ENCODE measurements at regions of chr11 and their contacts with region 1.

Region 1: GRCh38 chr11:125164422-125165110 is at the start of gene PKNOX2:
- DNase-seq: peak; percentile 85 to 95
- ATAC-seq: peak; percentile 90
- H3K4me3 ChIP-seq: peak within 1 kb of the TSS; percentile 75 to 93
- H3K27ac ChIP-seq: peak within 1 kb of the TSS; percentile 64 to 90
- H3K4me1 ChIP-seq: no peaks in the 10 kb centered on the region
- H3K27me3 ChIP-seq: no peaks in the 10 kb centered on the region
- total RNA-seq, gene PKNOX2: 7.7 to 19.8 TPM

Region 2: DNA sequence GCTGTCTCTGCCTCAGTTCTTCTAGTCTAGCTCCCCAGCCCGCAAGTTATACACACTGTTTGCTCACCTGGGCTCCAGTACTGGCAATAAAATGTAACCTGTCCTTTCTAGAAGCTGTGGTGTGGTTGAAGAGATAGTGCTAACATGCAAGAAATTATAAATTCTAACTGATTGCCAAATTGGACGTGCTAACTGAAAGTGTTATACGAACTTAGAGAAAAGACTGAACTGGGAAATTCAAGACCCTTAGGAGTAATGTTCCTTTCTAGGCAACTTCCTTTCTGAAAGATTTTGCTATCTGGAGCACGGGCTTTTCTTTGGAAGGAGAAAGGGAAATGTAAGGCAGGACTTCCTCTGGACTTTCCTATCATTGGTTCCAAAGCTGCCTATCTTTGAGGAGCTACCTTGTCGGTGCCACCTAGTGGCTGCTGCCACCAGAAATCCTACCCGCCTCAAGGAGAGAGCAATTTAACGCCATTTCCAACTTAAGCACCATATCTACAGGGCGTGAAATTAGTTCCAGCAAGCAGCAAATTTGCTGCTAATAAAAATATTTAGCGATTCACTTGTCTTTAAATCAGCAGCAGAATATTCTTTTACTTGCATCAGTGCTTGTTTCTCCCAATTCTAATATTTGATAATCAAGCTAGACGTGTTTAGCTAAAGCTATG is 40.5 kb before region 1 on chr11:
- intact Hi-C with region 1: loop called in 1 of 2 experiments (anchors 5 kb)
- DNase-seq: peak in 1 of 2 donors; percentile 68
- ATAC-seq: peak; percentile 69
- H3K4me3 ChIP-seq: no peak overlapping the region
- H3K27ac ChIP-seq: no peak overlapping the region
- H3K4me1 ChIP-seq: no peaks in the 10 kb centered on the region
- H3K27me3 ChIP-seq: no peaks in the 10 kb centered on the region

Region 3: GRCh38 chr11:125224391-125225010 is 59.9 kb after region 1 on chr11:
- intact Hi-C with region 1: loop called (anchors 5 kb)
- DNase-seq: peak in 1 of 2 donors; percentile 76
- ATAC-seq: no peak
- H3K4me3 ChIP-seq: no peak overlapping the region
- H3K27ac ChIP-seq: no peak overlapping the region
- H3K4me1 ChIP-seq: no peaks in the 10 kb centered on the region
- H3K27me3 ChIP-seq: no peaks in the 10 kb centered on the region

Region 4: DNA sequence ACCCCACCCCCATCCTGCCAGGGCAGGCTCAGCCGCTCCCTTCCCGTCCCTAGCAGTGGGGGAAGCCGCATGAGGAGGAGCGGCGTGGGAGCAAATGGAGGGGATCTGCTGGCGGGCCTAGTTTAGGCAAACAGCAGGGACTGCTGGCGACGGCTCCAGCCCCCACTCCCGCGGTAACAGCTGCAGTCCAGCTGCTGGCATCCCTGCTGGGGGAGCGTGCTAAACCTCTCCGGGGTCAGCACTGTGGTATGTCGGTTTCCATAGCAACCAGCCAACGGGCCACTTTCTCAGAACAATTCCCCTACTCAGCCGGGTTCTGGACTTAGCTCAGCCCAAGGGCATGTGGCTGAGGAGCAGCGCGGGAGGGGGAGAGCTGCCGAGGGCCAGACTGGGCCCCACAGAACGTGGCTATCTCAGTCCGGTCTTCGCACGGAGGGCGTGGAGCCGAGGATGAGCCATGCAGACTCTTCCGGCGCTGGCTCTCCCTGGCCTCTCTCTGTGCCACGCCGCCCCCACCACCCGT is 98.8 kb after region 1 on chr11:
- intact Hi-C with region 1: loop called in 1 of 2 experiments (anchors 5 kb)
- DNase-seq: peak; percentile 89 to 91
- ATAC-seq: peak; percentile 81
- H3K4me3 ChIP-seq: no peak overlapping the region
- H3K27ac ChIP-seq: no peak overlapping the region
- H3K4me1 ChIP-seq: no peaks in the 10 kb centered on the region
- H3K27me3 ChIP-seq: no peaks in the 10 kb centered on the region

Region 5: DNA sequence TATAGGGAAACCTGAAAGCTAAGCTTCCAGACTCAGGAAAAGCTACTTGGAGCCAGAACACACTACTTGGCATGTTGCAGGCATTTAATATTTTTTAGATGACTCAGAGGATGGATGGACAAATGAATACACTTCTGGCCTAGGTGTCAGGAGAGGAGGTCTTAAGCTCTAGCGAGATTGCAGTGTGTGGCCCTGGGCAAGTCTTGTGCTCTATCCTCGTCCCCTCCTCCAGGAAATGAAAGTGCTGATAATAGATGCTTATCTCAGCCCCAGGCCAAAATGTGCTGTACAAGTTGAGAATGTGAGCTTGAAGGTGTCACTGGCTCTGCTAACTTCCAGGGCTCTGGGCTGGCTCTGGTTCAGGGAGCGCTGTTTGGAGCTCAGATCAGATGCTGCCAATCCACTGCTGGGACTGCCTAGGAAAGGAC is 136.2 kb after region 1 on chr11:
- intact Hi-C with region 1: loop called in 1 of 2 experiments (anchors 5 kb)
- DNase-seq: peak in 1 of 2 donors; percentile 74
- ATAC-seq: peak; percentile 66
- H3K4me3 ChIP-seq: no peak overlapping the region
- H3K27ac ChIP-seq: peak overlapping the region in 1 of 2 donors; percentile 15
- H3K4me1 ChIP-seq: no peaks in the 10 kb centered on the region
- H3K27me3 ChIP-seq: no peaks in the 10 kb centered on the region

Region 6: GRCh38 chr11:125345421-125346178 is 181.0 kb after region 1 on chr11:
- intact Hi-C with region 1: loop called (anchors 2 to 5 kb)
- DNase-seq: peak; percentile 86 to 92
- ATAC-seq: peak; percentile 86
- H3K4me3 ChIP-seq: no peak overlapping the region
- H3K27ac ChIP-seq: no peak overlapping the region
- H3K4me1 ChIP-seq: no peaks in the 10 kb centered on the region
- H3K27me3 ChIP-seq: no peaks in the 10 kb centered on the region

Region 7: DNA sequence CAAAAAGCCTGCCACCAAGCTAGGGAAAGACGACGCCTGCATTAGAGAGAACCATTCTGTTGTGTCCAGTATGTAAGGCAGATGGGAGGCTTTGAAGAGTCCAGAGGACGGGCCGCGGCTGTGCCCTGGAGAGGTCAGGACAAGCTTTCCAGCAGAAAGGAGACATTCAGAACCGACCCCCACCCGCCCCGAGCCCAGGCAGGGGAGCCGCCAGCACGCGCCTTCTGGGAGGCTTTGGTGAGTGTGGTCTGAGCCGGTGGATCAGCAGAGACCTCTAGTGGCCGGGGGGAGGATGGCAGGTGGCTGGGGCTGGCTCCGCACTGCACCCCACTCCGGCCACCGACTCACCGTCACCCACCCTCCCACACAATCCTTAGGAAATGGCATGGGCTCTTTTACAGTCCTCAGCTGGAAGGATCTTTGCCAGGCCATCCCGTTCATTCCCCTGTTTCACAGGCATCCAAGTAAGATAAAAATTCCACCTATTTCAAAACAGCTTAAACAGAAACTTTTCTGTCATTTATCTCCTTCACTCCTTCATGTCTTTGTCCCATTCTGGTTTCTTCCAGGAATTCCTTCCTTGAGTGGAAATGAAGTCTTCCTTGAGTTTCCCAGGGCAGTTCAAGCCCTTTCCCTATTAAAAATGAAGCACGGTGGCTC is 240.3 kb after region 1 on chr11:
- intact Hi-C with region 1: loop called (anchors 1 to 5 kb)
- DNase-seq: peak; percentile 79 to 93
- ATAC-seq: peak; percentile 92
- H3K4me3 ChIP-seq: no peak overlapping the region
- H3K27ac ChIP-seq: no peak overlapping the region
- H3K4me1 ChIP-seq: no peaks in the 10 kb centered on the region
- H3K27me3 ChIP-seq: no peaks in the 10 kb centered on the region

Region 8: GRCh38 chr11:125429166-125429707 is 264.7 kb after region 1 on chr11:
- intact Hi-C with region 1: no loop called
- DNase-seq: peak in 1 of 2 donors; percentile 81
- ATAC-seq: no peak
- H3K4me3 ChIP-seq: no peak overlapping the region
- H3K27ac ChIP-seq: no peak overlapping the region
- H3K4me1 ChIP-seq: no peaks in the 10 kb centered on the region
- H3K27me3 ChIP-seq: no peaks in the 10 kb centered on the region